A673 (cell line): ENCODE measurements at regions of chr15 and their contacts with region 1.

Region 1: GRCh38 chr15:101294731-101295606 is at the start of gene SNRPA1:
- DNase-seq: peak; percentile 98
- H3K4me3 ChIP-seq: peak within 1 kb of the TSS; percentile 81
- H3K27ac ChIP-seq: peak within 1 kb of the TSS; percentile 94
- H3K4me1 ChIP-seq: peaks cover 12% of the 10 kb centered on the region
- H3K27me3 ChIP-seq: no peaks in the 10 kb centered on the region
- CTCF ChIP-seq: no peak
- total RNA-seq, gene SNRPA1: 192 and 206 TPM in 2 replicates

Region 2: DNA sequence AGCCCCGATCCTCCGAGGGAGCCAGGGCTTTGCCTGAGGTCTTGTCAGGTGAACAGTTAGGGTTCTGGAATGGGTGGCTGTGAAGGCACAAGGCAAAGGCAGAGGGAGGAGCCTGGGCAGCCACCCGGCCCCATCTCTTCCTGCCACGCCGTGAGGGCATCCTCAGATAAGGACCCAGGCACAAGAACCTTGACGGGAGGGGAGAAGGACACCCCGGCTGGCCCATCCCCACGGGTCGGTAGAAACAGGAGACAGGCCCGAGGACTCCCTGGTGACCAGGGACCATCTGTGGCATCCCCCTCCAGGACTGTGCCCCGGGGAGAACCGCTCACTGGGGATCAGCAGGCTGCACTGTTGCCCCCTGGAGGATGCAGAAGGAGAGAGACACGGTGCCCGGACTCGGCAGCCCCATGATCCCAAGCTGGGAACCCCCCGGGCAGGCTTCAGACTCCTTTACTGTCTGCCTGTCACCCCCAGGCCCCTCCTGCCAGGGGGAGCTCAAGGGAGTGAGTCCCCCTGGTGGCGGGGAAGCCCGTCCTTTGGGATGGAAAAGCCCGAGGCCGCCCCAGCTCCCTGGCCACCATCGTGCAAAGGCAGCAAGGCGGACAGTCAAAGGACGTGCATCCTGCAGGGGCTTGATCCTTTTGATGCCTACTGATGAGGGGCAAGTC is 206.9 kb after region 1 on chr15:
- CTCF ChIA-PET with region 1: interaction called, 4 read pairs
- POLR2A ChIA-PET with region 1: no interaction called
- intact Hi-C with region 1: loop called (anchors 1 kb)
- DNase-seq: peak; percentile 62
- H3K4me3 ChIP-seq: no peak overlapping the region
- H3K27ac ChIP-seq: no peak overlapping the region
- H3K4me1 ChIP-seq: no peaks in the 10 kb centered on the region
- H3K27me3 ChIP-seq: no peaks in the 10 kb centered on the region
- CTCF ChIP-seq: peak; percentile 78

Region 3: DNA sequence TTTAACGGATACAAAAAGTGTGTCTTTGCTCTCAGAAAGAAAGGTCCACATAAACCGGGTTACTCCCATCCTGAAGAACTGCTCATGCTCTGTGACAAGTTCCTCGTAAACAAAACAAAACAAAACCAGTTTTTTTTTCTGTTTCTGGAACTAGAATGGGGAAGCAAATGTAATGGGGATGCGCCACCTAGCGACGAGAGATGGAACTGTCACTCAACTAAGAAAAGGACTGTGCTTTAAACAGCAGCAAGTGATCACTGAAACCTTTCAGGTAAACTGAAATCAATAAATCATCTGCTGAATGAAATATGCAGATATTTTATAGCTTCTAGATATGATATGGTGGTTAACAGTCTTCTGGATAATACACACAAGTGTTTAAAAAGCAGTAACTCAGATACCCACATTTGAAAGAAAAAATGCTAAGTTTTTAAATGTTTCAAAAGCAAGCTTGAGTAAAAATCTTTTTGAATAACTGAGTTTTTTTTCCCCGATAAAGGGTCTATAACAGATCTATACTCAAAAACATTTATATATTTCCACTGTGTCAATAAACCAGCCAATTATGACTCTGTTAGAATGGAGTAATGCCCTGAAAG is 346.3 kb after region 1 on chr15:
- CTCF ChIA-PET with region 1: interaction called, 7 read pairs
- POLR2A ChIA-PET with region 1: no interaction called
- intact Hi-C with region 1: loop called (anchors 2 kb)
- DNase-seq: peak; percentile 82
- H3K4me3 ChIP-seq: peak overlapping the region; percentile 12
- H3K27ac ChIP-seq: peak overlapping the region; percentile 94
- H3K4me1 ChIP-seq: peaks cover 23% of the 10 kb centered on the region
- H3K27me3 ChIP-seq: no peaks in the 10 kb centered on the region
- CTCF ChIP-seq: peak; percentile 97